GM18951 (cell line): ENCODE measurements at regions of chr3 and their contacts with region 1.

Region 1: GRCh38 chr3:66276705-66277274 is 56.0 kb downstream of the SLC25A26 start:
- POLR2A ChIP-seq: no peak

Region 2: DNA sequence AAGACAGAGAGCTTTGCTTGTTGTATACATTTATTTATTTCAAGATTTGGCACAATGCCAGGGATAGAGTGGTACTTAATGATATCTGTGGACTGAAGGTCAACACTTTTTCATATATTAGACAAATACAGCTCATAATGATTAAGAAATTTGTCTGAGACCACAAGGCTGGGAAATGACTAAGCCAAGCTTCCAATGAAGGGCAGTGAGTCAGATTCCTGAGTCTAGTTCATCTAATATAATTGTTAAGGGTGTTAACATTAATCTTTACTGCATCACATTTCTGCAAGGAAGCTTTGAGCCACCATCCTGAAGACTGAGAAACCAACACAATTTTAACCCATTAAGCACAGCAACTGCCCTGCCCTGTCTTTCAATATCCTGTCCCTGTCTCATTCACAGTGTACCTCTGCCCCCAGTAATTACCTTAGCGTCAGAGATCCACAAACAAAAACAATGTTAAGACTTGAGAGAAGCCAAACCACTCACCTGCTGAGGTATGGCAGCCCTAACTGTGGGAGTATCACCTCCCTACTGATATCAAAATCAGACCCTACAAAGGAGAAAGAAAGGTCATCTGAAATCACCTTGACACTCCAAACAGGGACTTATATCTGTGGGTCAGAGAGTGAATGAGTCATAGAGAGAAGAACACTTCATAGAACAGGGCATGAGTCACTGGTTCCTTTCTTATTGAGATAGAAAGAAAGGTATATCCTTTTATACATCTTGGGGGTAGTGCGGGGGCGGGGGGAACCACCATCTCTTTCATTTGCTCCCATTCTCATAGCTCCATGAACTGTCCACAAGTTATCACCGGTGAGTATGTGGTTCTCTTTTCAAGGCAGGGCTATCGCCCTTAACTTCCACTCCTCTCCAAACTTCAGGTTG is 312.8 kb before region 1 on chr3:
- in situ Hi-C with region 1: no loop called
- POLR2A ChIP-seq: no peak

Region 3: GRCh38 chr3:66378256-66378823 is 101.5 kb after region 1 on chr3:
- in situ Hi-C with region 1: loop called (anchors 25 kb)
- POLR2A ChIP-seq: no peak